H1 (cell line): ENCODE measurements at regions of chr19 and their contacts with region 1.

Region 1: GRCh38 chr19:10580979-10581631 is 6.0 kb downstream of the AP1M2 start:
- DNase-seq: peak; percentile 90 to 94
- H3K4me3 ChIP-seq: no peak overlapping the region
- H3K27ac ChIP-seq: no peak overlapping the region
- H3K4me1 ChIP-seq: no peaks in the 10 kb centered on the region; a peak in 1 of 7 replicates
- H3K27me3 ChIP-seq: no peaks in the 10 kb centered on the region
- CTCF ChIP-seq: peak; percentile 84 to 100 (median 97)
- EP300 ChIP-seq: no peak
- POLR2A ChIP-seq: no peak
- RAD21 ChIP-seq: peak; percentile 96 to 97

Region 2: DNA sequence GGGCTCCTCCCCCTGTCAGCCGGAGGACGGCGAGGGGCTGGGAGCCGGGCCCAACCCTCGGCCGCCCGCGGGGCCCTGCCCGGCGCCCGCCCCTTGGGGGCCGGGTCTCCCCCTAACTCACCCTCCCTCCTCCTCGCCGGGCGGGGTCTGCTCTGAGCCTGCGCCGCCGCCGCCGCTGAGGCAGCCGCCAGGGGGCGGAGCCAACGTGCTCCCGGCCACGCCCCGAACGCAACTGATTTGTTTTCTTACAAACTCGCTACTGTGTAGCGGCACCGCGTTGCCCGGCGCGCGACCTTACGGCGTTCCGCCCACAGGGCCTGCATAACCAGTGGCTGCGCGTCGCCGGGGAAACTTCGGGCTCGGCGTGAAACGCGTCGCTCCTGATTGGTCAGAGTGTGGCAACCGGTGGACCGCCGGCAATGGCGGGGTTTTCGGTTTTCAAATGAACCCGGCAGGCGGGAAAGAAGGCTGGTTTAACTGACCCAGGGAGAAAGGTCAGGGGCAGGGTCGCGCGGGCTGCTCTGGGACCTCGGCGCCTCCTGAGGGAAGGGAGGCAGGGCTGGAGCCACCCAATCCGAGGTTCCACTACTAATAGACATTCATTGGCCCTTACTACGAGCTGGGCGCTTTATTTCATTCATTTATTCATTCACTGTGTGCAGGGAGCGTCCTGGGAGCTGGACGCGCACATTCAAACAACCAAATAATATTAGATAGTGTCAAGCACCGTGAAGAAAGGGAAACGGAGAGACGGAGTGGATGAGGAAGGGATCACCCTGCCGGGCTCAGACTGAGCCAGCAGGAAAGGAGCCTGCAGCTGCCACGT is 12.1 kb before region 1 on chr19 and contains the start of gene CDKN2D:
- CTCF ChIA-PET with region 1: interaction called, 19 read pairs
- POLR2A ChIA-PET with region 1: interaction called, 33 read pairs
- DNase-seq: peak; percentile 99
- H3K4me3 ChIP-seq: peak within 1 kb of the TSS; percentile 58 to 71 (median 70)
- H3K27ac ChIP-seq: peak within 1 kb of the TSS; percentile 79
- H3K4me1 ChIP-seq: peaks cover 0 to 19% (median 9%) of the 10 kb centered on the region in 4 experiments; a peak in 6 of 7 replicates
- H3K27me3 ChIP-seq: peaks cover 0 to 10% (median 7%) of the 10 kb centered on the region in 4 experiments; a peak in 4 of 7 replicates
- CTCF ChIP-seq: no peak
- EP300 ChIP-seq: no peak
- POLR2A ChIP-seq: peak; percentile 64 to 65
- RAD21 ChIP-seq: no peak
- total RNA-seq, gene CDKN2D: 2.6 and 3.0 TPM in 2 replicates

Region 3: DNA sequence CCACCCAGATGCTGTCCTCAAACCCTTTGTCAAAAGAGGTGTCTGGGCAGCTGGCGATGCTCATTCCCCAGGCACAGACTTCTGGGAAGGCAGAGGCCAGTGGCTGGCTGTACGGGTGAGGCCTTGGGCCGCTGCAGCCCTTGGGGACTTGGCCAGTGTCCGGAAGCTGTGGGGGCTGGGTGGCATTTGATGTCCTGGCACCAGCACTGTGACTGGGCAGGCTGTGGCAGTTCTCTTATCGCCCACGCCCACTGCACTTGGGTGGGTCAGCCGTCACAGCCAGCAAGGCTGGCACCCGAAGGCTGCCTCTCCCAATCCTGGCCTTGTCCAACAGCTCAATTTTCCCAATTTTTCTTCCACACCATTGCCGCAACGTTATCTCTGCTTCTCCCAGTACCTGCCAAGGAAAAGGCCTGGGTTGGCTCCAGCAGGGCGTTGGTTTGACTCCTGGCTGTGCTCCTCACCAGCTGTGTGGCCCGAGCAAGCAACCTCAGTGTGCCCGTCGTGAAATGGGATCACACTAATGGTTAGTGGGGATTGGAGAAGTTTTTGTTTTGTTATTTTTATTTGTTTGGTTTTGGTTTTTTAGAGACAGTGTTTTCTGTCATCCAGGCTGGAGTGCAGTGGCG is 31.5 kb after region 1 on chr19:
- CTCF ChIA-PET with region 1: interaction called, 46 read pairs
- POLR2A ChIA-PET with region 1: interaction called, 3 read pairs
- DNase-seq: no peak
- H3K4me3 ChIP-seq: no peak overlapping the region
- H3K27ac ChIP-seq: no peak overlapping the region
- H3K4me1 ChIP-seq: no peaks in the 10 kb centered on the region
- H3K27me3 ChIP-seq: no peaks in the 10 kb centered on the region
- CTCF ChIP-seq: no peak
- EP300 ChIP-seq: no peak
- POLR2A ChIP-seq: no peak
- RAD21 ChIP-seq: no peak

Region 4: GRCh38 chr19:10644260-10645007 is 63.3 kb after region 1 on chr19:
- CTCF ChIA-PET with region 1: interaction called, 267 read pairs
- POLR2A ChIA-PET with region 1: interaction called, 27 read pairs
- DNase-seq: peak; percentile 68 to 95
- H3K4me3 ChIP-seq: no peak overlapping the region; a peak in 1 of 8 replicates
- H3K27ac ChIP-seq: 0 out of 2 replicates have a peak overlapping the region, but pooled peaks have one; percentile 26
- H3K4me1 ChIP-seq: peaks cover 6 to 17% (median 13%) of the 10 kb centered on the region in 4 experiments
- H3K27me3 ChIP-seq: no peaks in the 10 kb centered on the region
- CTCF ChIP-seq: peak; percentile 89 to 96 (median 94)
- EP300 ChIP-seq: no peak
- POLR2A ChIP-seq: no peak; a peak in 1 of 3 replicates
- RAD21 ChIP-seq: peak; percentile 88 to 89

Region 5: DNA sequence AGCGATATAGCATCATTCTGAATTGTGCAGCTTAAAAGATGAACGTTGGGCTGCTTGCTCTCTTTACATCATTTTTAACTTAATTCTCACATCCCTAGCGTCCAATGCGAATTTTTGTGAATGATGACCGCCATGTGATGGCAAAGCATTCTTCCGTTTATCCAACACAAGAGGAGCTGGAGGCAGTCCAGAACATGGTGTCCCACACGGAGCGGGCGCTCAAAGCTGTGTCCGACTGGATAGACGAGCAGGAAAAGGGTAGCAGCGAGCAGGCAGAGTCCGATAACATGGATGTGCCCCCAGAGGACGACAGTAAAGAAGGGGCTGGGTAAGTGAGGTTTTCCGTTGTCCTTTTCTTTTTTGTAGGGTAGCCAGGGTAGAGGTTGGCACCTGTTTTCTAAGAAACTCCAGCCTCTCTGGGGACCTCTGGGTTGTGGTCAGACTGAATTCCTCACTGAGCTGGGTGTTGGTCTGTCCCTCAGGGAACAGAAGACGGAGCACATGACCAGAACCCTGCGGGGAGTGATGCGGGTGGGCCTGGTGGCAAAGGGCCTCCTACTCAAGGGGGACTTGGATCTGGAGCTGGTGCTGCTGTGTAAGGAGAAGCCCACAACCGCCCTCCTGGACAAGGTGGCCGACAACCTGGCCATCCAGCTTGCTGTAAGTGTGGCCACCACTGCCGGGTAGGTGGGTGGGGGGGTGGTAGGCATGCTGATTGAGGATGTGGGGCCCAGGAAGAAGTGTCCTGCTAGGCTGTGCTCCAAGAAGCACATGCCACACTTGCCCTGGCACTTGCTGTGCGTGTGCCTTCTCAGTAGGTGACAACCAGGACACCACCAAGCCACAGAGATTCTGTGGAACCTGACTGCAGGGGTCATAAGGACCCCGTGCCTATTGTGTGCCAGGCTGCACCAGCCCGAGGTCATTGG is 90.0 kb after region 1 on chr19:
- CTCF ChIA-PET with region 1: interaction called, 24 read pairs
- POLR2A ChIA-PET with region 1: interaction called, 3 read pairs
- DNase-seq: no peak
- H3K4me3 ChIP-seq: no peak overlapping the region
- H3K27ac ChIP-seq: no peak overlapping the region
- H3K4me1 ChIP-seq: peaks cover 0 to 3% (median 0%) of the 10 kb centered on the region in 4 experiments; a peak in 1 of 7 replicates
- H3K27me3 ChIP-seq: no peaks in the 10 kb centered on the region
- CTCF ChIP-seq: no peak
- EP300 ChIP-seq: no peak
- POLR2A ChIP-seq: peak in 1 of 2 experiments; percentile 47; a peak in 2 of 3 replicates
- RAD21 ChIP-seq: no peak

Region 6: GRCh38 chr19:10952809-10953208 is 371.7 kb after region 1 on chr19:
- CTCF ChIA-PET with region 1: no interaction called
- POLR2A ChIA-PET with region 1: no interaction called
- DNase-seq: no peak
- H3K4me3 ChIP-seq: no peak overlapping the region
- H3K27ac ChIP-seq: no peak overlapping the region
- H3K4me1 ChIP-seq: no peaks in the 10 kb centered on the region
- H3K27me3 ChIP-seq: no peaks in the 10 kb centered on the region
- CTCF ChIP-seq: no peak
- EP300 ChIP-seq: no peak
- POLR2A ChIP-seq: no peak
- RAD21 ChIP-seq: no peak